ENCODE measurements at regions of chr1 and their contacts with region 1.

Region 1: GRCh38 chr1:39196244-39197215 is 8.0 kb upstream of the MACF1 start:
- DNase-seq: no peak
- H3K4me3 ChIP-seq: no peak overlapping the region
- CTCF ChIP-seq: no peak
- POLR2A ChIP-seq: no peak

Region 2: DNA sequence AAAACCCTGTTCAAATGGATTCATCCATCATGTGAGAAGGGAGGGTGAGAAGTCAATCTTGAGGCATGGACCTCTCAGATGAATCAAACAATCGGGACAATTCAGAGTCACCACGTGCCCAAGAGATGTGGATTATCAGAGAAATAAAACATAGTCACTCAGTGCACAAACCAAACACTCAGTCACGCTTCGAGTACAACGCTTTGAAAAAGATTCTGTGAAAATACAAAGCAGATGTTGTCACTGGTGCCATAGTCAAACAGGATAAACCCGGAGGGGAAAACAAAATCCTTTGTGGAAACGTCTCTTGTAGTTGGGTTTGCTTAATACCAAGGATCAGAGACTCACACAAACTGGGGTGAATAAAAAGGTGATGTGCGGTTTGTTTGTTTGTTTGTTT is 525.3 kb before region 1 on chr1:
- intact Hi-C with region 1: no loop called
- DNase-seq: no peak
- H3K4me3 ChIP-seq: no peak overlapping the region
- CTCF ChIP-seq: no peak
- POLR2A ChIP-seq: no peak

Region 3: DNA sequence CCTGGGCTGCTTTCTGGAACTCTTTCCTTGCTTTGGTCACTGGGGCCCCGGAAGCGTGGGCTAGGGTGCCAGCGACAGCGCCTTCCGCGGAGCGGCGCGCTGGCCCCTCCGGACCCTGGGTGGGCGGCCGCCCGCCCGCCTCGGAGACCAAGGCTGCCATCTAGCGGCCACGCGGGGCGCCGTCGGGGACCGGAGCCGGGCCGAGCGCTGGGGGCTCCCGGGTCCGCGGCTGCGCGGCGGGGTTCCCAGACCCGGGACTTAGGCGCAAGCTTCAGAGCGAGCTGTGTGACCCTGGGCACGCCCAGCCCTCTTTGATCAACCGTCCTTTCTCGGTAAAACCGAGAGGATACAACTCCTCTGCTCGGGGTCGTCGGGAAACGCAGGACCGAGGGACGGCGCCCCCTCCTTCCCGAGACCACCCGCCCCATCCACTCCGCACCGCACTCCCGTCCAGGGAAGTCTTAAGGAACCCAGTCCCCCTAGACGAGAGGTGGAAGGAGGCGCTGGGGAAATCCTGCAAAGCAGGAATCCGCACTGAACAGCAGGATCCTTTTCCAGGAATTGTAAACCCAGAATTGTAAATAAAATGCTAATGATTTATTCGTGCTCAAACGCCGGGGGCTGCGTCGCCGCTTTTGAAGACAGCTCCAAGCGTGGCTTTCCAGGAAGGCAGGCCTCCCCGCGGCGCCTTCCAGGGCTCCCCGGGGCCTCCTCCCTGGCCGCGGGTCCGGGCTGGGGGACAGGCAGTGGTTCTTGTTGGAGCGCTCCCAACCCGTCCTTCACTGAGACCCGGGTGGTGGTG is 378.2 kb before region 1 on chr1:
- intact Hi-C with region 1: no loop called
- DNase-seq: no peak
- H3K4me3 ChIP-seq: no peak overlapping the region
- CTCF ChIP-seq: no peak
- POLR2A ChIP-seq: no peak

Region 4: GRCh38 chr1:38941527-38942019 is 255.0 kb before region 1 on chr1 and contains the start of gene RHBDL2:
- intact Hi-C with region 1: no loop called
- DNase-seq: peak; percentile 40 to 89
- H3K4me3 ChIP-seq: peak within 1 kb of the TSS; percentile 13
- CTCF ChIP-seq: no peak
- POLR2A ChIP-seq: no peak
- total RNA-seq, gene RHBDL2: 17.0 to 30.6 (median 22.2) TPM

Region 5: GRCh38 chr1:39102537-39103327 is 93.8 kb before region 1 on chr1:
- intact Hi-C with region 1: loop called (anchors 10 kb)
- DNase-seq: peak; percentile 62 to 87
- H3K4me3 ChIP-seq: no peak overlapping the region
- CTCF ChIP-seq: peak in 1 of 3 donors; percentile 87
- POLR2A ChIP-seq: no peak

Region 6: DNA sequence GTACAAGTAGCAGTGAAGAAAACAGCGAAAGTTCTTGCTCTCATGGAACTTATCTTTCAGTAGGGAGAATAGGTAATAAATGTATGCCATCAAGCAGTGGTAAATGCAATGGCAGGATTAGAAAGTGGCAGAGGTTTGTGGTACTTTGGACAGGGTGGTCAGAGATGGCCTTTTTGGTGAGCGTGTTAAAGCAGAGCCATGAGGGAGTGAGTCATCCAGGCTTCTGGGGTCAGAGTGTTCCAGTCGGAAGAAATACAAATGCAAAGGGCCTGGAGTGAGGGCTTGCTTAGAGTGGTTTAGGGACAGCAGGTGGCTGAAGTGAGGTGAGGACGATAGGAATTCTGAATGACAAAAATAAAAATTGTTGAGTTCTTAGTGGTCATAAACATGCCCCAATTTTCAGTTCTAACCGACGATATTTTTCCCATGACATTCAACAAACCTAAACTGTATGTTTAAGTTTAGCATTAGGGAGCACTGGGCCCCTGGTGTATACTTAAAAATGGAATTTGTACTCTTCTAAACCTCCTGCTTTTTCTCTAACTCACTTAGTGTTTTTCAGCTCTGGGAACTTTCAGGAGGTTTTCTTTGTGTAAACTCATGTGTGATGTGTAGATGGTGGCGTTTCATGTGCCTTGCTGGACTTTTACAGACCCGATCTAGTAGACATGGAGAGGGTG is 86.1 kb after region 1 on chr1:
- intact Hi-C with region 1: no loop called
- DNase-seq: no peak
- H3K4me3 ChIP-seq: no peak overlapping the region
- CTCF ChIP-seq: no peak
- POLR2A ChIP-seq: no peak

Measured in lower leg skin (tissue), 4 donors.